Right ventricle myocardium superior (tissue), 1 donor: ENCODE measurements at regions of chr1 and their contacts with region 1.

Region 1: DNA sequence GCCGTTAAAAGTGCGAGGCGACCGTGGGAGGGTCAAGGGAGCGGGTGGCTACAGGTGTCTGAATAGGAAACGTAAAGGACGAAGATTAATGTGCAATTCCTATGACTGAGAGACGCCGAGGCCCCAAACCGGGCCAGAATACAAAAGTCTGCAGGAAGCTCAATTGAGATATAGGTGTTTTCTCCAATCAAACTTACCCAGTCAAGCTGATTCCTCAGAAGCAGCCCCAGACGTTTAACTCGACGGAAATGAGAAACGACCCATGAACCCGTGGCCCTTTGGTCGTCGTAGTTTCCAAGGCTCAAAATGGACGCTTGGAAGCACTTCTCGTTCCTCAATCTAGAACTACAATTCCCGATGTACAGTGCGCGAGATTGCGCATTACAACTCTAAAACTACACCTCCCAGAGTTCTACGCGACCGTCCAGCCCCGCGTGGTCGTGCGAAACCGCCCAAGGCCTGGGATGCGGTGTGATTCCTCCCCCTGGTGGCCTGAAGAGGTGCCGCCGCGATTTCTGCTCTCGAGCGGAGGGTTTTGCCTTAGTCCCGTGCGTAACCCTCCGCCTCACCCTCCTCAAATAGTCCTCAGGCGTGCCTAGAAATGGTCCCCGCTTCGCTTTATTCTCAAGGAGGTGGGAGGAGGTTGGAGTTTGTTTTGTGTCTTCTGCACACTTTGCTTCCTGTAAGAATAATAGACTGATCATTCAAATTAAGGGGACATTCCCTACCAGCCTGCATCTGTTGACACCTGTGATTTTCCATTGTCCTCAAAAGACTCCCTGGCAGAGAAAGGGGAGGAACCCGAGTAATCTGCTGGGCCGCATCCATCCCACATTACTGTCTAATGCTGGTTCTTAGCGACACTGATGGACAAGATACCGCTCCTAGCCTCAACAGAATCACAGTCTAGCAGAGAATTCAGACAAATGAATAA is at the start of gene PAFAH2:
- DNase-seq: peak; percentile 98
- ATAC-seq: peak; percentile 99
- total RNA-seq, gene PAFAH2: 12.1 TPM

Region 2: DNA sequence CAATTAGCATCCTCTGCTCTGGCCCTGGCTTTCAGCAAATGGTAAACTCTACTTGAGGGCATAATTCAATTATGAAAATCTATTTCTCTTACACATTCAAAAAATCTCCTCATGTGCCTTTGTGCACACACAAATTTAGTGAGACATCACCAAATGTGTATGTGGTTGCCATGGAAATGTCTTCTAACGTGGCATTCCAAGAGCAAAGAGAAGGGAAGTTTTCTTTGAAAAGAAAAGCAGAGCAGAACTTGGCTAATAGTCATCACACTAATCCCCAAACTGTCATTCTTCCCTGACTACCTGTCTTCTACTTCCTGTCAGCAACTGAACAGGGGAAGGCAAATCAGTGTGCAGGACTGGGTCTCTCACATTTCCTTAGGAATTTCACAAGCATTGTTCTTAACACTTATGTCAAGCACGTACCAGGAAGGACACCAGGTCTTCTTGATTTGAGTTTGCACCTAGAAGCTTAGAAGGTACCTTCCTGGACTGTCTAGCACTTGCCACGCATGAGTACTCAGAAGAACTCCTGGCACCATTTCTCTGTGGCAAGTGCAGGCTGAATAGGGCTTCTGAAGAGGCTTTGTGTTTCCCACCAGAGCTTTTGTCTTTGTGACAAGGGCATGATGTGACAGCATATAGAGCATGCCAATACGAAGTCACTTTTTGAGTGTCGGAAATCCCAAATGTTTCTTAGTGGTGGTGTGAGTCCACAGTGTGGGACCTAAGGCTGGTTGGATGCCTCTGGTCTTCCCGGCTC is 349.2 kb before region 1 on chr1:
- intact Hi-C with region 1: no loop called
- DNase-seq: no peak
- ATAC-seq: no peak

Region 3: GRCh38 chr1:25895365-25895993 is 102.6 kb before region 1 on chr1:
- intact Hi-C with region 1: loop called (anchors 5 kb)
- DNase-seq: peak; percentile 93
- ATAC-seq: peak; percentile 98